IMR-90 (cell line): ENCODE measurements at regions of chr1 and their contacts with region 1.

Region 1: GRCh38 chr1:164226977-164227376 is 332.0 kb upstream of the PBX1 start:
- DNase-seq: no peak
- ATAC-seq: no peak
- H3K4me3 ChIP-seq: no peak overlapping the region
- H3K27ac ChIP-seq: no peak overlapping the region
- H3K4me1 ChIP-seq: no peaks in the 10 kb centered on the region
- H3K27me3 ChIP-seq: no peaks in the 10 kb centered on the region
- CTCF ChIP-seq: no peak
- POLR2A ChIP-seq: no peak
- RAD21 ChIP-seq: no peak

Region 2: DNA sequence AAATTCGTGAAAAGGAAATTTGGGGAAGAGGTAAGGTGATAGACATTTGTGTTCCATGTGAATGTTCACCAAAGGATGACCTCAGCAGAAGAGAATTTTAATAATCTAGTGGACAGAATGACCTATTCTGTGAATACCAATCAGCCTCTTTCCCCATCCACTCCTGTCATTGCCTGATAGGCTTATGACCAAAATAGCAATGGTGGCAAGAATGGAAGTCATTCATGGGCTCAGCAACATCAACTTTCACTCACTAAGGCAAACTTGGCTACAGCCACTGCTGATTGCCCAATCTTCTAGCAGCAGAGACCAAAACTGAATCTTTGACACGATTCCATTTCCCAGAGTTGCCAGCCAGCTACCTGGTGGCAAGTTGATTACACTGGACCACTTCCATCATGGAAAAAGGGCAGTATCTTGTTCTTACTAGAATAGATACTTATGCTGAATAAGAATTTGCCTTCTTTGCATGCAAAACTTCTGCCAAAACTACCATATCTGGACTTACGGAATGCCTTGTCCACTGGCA is 16.7 kb before region 1 on chr1:
- CTCF ChIA-PET with region 1: no interaction called
- POLR2A ChIA-PET with region 1: no interaction called
- dilution Hi-C with region 1: no loop called
- in situ Hi-C with region 1: no loop called
- intact Hi-C with region 1: loop called (anchors 1 kb)
- DNase-seq: no peak
- ATAC-seq: no peak
- H3K4me3 ChIP-seq: no peak overlapping the region
- H3K27ac ChIP-seq: no peak overlapping the region
- H3K4me1 ChIP-seq: no peaks in the 10 kb centered on the region
- H3K27me3 ChIP-seq: no peaks in the 10 kb centered on the region
- CTCF ChIP-seq: no peak
- POLR2A ChIP-seq: no peak
- RAD21 ChIP-seq: no peak

Region 3: DNA sequence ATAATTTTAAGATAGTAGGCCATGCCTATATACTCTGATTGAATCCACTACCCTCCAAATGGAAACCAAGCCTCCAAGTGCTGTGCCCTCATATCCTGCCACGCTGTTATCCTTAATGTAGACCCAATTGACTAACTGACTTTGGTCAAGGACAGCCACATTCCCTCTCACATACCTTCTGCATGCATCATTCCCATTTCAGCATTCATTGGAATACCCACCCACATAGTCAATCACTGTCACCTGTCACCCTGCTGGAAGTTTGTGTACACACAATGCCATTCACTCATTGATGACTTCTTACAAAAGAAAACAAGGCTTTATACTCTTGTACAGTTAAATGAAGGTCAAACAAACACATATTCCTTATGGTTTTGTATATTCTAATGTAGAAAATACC is 110.9 kb after region 1 on chr1:
- CTCF ChIA-PET with region 1: no interaction called
- POLR2A ChIA-PET with region 1: no interaction called
- dilution Hi-C with region 1: no loop called
- in situ Hi-C with region 1: no loop called
- intact Hi-C with region 1: no loop called
- DNase-seq: no peak
- ATAC-seq: no peak
- H3K4me3 ChIP-seq: no peak overlapping the region
- H3K27ac ChIP-seq: no peak overlapping the region
- H3K4me1 ChIP-seq: no peaks in the 10 kb centered on the region
- H3K27me3 ChIP-seq: no peaks in the 10 kb centered on the region
- CTCF ChIP-seq: no peak
- POLR2A ChIP-seq: no peak
- RAD21 ChIP-seq: no peak